Gastrocnemius medialis (tissue), 4 donors: ENCODE measurements at regions of chr1 and their contacts with region 1.

Region 1: GRCh38 chr1:92994105-92994712 is 32.9 kb upstream of the DIPK1A start:
- DNase-seq: peak; percentile 55 to 56
- ATAC-seq: peak; percentile 91 to 98
- H3K4me3 ChIP-seq: no peak overlapping the region
- H3K27ac ChIP-seq: no peak overlapping the region
- H3K4me1 ChIP-seq: no peaks in the 10 kb centered on the region
- H3K27me3 ChIP-seq: no peaks in the 10 kb centered on the region
- CTCF ChIP-seq: peak; percentile 85 to 90 (median 89)
- POLR2A ChIP-seq: no peak

Region 2: DNA sequence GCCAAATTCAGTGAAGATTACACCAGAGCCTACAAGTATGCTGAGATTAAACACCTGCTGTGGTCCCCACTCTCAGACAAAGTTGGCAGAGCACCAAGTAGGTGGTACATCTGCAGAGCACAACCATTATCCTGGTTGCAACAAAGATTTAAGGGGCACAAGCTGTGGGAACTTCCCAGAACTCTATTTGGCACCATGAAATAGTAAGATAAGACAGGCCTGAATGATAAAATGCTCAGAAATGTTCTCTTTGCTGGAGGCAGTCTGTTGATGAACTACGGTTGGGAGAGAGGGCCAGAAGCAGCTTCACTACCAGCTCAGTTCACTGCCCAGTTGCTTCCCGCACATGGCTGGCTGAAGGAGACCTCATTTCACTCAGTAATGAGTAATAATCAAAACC is 142.5 kb before region 1 on chr1:
- in situ Hi-C with region 1: loop called in 3 of 4 experiments (anchors 5 kb)
- intact Hi-C with region 1: no loop called
- DNase-seq: no peak
- ATAC-seq: no peak
- H3K4me3 ChIP-seq: no peak overlapping the region
- H3K27ac ChIP-seq: no peak overlapping the region
- H3K4me1 ChIP-seq: peaks cover 0 to 3% of the 10 kb centered on the region in 2 donors
- H3K27me3 ChIP-seq: no peaks in the 10 kb centered on the region
- CTCF ChIP-seq: no peak
- POLR2A ChIP-seq: no peak

Region 3: GRCh38 chr1:92858564-92859399 is 135.4 kb before region 1 on chr1:
- in situ Hi-C with region 1: loop called (anchors 5 kb)
- intact Hi-C with region 1: loop called (anchors 1 kb)
- DNase-seq: peak; percentile 18 to 27
- ATAC-seq: peak; percentile 87 to 92
- H3K4me3 ChIP-seq: peak overlapping the region; percentile 26 to 46 (median 40)
- H3K27ac ChIP-seq: peak overlapping the region; percentile 53 to 66 (median 60)
- H3K4me1 ChIP-seq: peaks cover 11 to 13% of the 10 kb centered on the region in 2 donors
- H3K27me3 ChIP-seq: no peaks in the 10 kb centered on the region
- CTCF ChIP-seq: peak; percentile 89 to 98 (median 90)
- POLR2A ChIP-seq: no peak

Region 4: GRCh38 chr1:92909321-92909720 is 84.9 kb before region 1 on chr1:
- in situ Hi-C with region 1: no loop called
- intact Hi-C with region 1: no loop called
- DNase-seq: no peak
- ATAC-seq: no peak
- H3K4me3 ChIP-seq: no peak overlapping the region
- H3K27ac ChIP-seq: no peak overlapping the region
- H3K4me1 ChIP-seq: no peaks in the 10 kb centered on the region
- H3K27me3 ChIP-seq: no peaks in the 10 kb centered on the region
- CTCF ChIP-seq: no peak
- POLR2A ChIP-seq: no peak